ENCODE measurements at regions of chr6 and their contacts with region 1.

Region 1: DNA sequence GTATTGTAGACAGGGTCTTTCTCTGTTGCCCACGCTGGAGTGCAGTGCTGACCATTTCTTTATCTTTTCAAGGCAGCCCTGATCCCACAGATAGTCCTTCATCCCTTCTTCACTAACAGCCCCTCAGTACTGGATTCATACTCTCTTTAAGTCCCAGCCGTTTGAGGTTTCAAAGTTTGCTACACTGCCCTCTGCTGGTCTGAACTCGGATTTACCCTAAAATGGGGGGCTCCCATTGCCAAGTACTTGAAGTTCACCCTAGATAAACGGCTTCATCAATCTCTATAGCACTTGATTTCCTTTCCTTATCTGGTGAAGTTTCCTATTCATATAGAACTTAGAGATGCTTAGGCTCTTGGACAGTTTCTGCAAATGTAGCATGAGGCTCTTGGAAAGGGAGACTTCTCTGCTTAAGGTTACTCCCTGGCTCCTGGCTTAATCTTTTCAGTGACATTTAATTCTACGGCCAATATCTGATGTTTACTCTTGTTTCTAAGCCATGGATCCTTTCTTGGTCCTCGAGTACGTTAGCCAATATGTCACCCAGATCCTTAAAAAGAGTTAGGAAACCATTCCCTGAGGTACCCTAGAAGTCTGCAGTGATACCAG is 21.4 kb upstream of the PREP start:
- DNase-seq: peak; percentile 24 to 48 (median 39)
- H3K4me3 ChIP-seq: no peak overlapping the region
- H3K4me3 Mint-ChIP-seq: no peak overlapping the region
- H3K27ac ChIP-seq: no peak overlapping the region
- H3K27ac Mint-ChIP-seq: no peak overlapping the region
- H3K4me1 ChIP-seq: no peaks in the 10 kb centered on the region
- H3K4me1 Mint-ChIP-seq: peaks cover 2% of the 10 kb centered on the region
- H3K27me3 ChIP-seq: no peaks in the 10 kb centered on the region
- H3K27me3 Mint-ChIP-seq: peaks cover 2 to 4% (median 3%) of the 10 kb centered on the region in 3 donors
- CTCF ChIP-seq: peak; percentile 82

Region 2: DNA sequence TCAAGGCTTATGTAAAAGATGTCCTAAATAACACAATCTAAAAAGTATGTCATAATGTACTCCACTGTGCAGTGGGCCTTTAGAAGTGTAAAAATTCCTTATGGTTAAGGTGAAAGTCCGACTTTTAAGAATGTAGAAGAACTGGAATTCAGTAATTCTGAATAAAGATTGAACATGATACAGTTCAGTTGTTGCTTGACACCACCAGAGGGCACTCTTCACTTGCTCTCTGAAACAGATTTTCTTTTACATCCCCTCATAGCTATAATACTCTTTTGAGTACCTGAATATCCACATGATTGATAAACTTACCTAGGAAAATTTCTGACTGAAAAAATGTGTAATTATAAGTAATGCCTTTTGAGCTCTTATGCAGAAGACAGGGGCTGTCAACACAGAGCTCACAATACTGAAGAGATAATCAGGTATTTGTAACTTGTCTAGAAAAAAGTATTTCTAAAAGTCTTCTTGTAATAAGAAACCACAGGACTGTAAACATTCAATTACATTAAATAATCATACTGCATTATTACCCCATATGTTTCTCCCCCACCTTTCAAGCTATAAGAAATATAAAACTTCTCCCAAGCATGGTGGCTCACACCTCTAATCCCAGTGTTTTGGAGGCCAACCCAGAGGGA is 336.6 kb before region 1 on chr6:
- intact Hi-C with region 1: loop called (anchors 5 kb)
- DNase-seq: peak; percentile 3 to 23 (median 20)
- H3K4me3 ChIP-seq: no peak overlapping the region
- H3K4me3 Mint-ChIP-seq: no peak overlapping the region
- H3K27ac ChIP-seq: no peak overlapping the region
- H3K27ac Mint-ChIP-seq: no peak overlapping the region
- H3K4me1 ChIP-seq: no peaks in the 10 kb centered on the region
- H3K4me1 Mint-ChIP-seq: no peaks in the 10 kb centered on the region
- H3K27me3 ChIP-seq: no peaks in the 10 kb centered on the region
- H3K27me3 Mint-ChIP-seq: peaks cover 0 to 10% (median 3%) of the 10 kb centered on the region in 3 donors
- CTCF ChIP-seq: peak; percentile 88

Region 3: GRCh38 chr6:105452924-105453756 is 28.9 kb after region 1 on chr6:
- intact Hi-C with region 1: no loop called
- DNase-seq: peak; percentile 3 to 8 (median 4)
- H3K4me3 ChIP-seq: no peak overlapping the region
- H3K4me3 Mint-ChIP-seq: peak overlapping the region in 1 of 2 donors; percentile 73
- H3K27ac ChIP-seq: no peak overlapping the region
- H3K27ac Mint-ChIP-seq: peak overlapping the region in 1 of 7 donors; percentile 37
- H3K4me1 ChIP-seq: peaks cover 8 to 10% of the 10 kb centered on the region in 2 donors
- H3K4me1 Mint-ChIP-seq: peaks cover 9% of the 10 kb centered on the region
- H3K27me3 ChIP-seq: no peaks in the 10 kb centered on the region
- H3K27me3 Mint-ChIP-seq: no peaks in the 10 kb centered on the region
- CTCF ChIP-seq: no peak